T-cell (primary cell): ENCODE measurements at regions of chr19 and their contacts with region 1.

Region 1: DNA sequence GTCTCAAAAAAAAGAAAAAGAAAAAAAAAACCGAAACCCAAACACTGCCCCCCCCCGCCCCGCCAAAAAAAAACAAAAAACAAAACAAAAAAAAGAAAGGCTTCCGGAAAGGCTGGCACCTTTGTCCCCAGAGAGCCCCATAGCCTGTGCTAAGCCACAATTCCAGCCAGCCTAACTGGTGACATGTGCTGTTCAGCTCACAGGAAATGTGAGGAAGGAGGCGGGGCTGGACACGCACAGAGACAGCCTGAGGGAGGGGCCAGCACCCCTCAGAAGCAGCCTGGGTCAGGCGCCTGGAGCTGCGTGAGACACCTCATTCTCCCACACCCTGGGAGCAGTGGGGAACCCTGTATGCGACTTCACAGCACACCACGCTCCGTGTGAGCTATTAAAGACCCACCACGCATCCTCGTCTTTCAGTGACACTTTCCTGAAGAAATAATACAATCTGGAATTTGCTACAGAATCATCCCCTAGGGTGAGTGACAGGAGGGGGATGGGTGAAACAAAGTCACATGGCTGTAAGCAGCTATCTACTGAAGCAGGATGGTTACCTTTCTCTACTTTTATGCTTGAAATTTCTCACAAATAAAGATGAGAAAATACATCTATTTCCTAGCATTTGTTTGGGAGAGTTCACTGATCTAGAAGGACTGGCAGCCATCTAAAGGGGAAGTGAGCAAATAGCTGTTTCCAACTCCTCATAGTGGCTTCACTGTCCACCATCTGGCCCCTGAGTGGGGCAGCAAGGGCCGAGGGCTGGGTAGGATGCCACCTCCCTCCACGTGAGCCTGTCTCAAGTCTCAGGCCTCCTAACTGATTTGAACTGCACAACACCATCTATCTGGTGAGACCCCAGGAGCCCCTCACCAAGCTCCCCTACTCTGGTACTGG is 12.3 kb upstream of the SLC35E1 start:
- DNase-seq: peak; percentile 64 to 98 (median 90)
- ATAC-seq: peak; percentile 83 to 86 (median 84)
- H3K4me3 ChIP-seq: peak overlapping the region; percentile 40 to 58
- H3K4me3 Mint-ChIP-seq: peak overlapping the region; percentile 63 to 86 (median 73)
- H3K27ac ChIP-seq: peak overlapping the region; percentile 76
- H3K27ac Mint-ChIP-seq: peak overlapping the region; percentile 88 to 90
- H3K4me1 ChIP-seq: peaks cover 53 to 91% of the 10 kb centered on the region in 2 experiments
- H3K4me1 Mint-ChIP-seq: peaks cover 83 to 89% (median 88%) of the 10 kb centered on the region in 3 donors
- H3K27me3 ChIP-seq: no peaks in the 10 kb centered on the region
- H3K27me3 Mint-ChIP-seq: no peaks in the 10 kb centered on the region

Region 2: DNA sequence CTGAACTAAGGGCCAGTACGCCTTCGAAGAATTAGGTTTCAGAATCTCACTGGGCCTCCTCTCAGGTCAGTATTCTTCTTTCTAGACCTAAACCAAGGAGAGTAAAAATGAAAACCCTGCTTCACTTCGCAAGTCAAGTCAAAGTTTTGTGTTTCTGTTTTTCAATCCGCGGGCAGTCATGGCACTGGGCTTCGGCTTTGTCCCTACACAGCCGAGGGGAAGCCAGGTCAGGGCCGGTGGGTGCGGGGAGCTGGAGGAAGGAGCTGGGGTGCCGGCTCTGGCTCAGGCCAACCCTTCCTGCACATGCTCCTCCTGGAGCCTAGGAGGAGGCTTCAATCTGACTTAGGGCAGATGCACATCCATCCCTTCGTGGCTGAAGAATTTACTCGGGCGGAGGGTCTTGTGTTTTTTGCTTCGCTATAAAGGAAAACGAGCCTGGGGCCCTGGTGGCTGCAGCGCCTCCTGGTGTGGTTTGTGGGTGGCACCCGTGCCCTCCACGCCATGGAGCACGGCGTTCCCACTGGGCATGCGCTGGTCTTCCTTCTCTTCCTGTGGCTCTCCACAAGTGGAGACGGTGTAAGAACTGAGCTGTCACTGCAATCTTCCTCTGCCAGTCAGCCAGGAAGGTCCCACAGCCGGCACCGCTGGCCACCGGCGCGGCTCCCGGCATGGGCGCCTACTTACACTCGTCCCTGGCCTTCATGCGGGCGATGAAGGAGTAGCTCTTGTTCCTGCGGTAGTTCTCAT is 65.8 kb before region 1 on chr19:
- CTCF ChIA-PET with region 1: no interaction called
- POLR2A ChIA-PET with region 1: no interaction called
- DNase-seq: no peak
- ATAC-seq: peak in 1 of 4 experiments; percentile 10
- H3K4me3 ChIP-seq: no peak overlapping the region
- H3K4me3 Mint-ChIP-seq: no peak overlapping the region
- H3K27ac ChIP-seq: no peak overlapping the region
- H3K27ac Mint-ChIP-seq: no peak overlapping the region
- H3K4me1 ChIP-seq: peaks cover 0 to 12% of the 10 kb centered on the region in 2 experiments
- H3K4me1 Mint-ChIP-seq: peaks cover 0 to 5% (median 4%) of the 10 kb centered on the region in 3 donors
- H3K27me3 ChIP-seq: no peaks in the 10 kb centered on the region
- H3K27me3 Mint-ChIP-seq: no peaks in the 10 kb centered on the region

Region 3: GRCh38 chr19:16542045-16542909 is 42.2 kb before region 1 on chr19 and contains the start of gene CHERP:
- CTCF ChIA-PET with region 1: interaction called in 1 of 2 experiments, 6 read pairs
- POLR2A ChIA-PET with region 1: interaction called, 3 to 11 read pairs
- DNase-seq: peak; percentile 88 to 98 (median 93)
- ATAC-seq: peak; percentile 85 to 91 (median 90)
- H3K4me3 ChIP-seq: peak within 1 kb of the TSS; percentile 75 to 96
- H3K4me3 Mint-ChIP-seq: peak within 1 kb of the TSS; percentile 85 to 92 (median 92)
- H3K27ac ChIP-seq: peak within 1 kb of the TSS; percentile 66
- H3K27ac Mint-ChIP-seq: peak within 1 kb of the TSS; percentile 87 to 91
- H3K4me1 ChIP-seq: peaks cover 19 to 66% of the 10 kb centered on the region in 2 experiments
- H3K4me1 Mint-ChIP-seq: peaks cover 58 to 63% (median 58%) of the 10 kb centered on the region in 3 donors
- H3K27me3 ChIP-seq: no peaks in the 10 kb centered on the region
- H3K27me3 Mint-ChIP-seq: no peaks in the 10 kb centered on the region
- total RNA-seq, gene CHERP: 52.6 to 76.7 (median 70.3) TPM

Region 4: GRCh38 chr19:16566161-16566560 is 18.3 kb before region 1 on chr19:
- CTCF ChIA-PET with region 1: interaction called in 1 of 2 experiments, 11 read pairs
- POLR2A ChIA-PET with region 1: interaction called in 1 of 2 experiments, 7 read pairs
- DNase-seq: peak; percentile 64 to 95 (median 87)
- ATAC-seq: peak; percentile 99 to 100 (median 100)
- H3K4me3 ChIP-seq: peak overlapping the region in 1 of 2 donors; percentile 32
- H3K4me3 Mint-ChIP-seq: peak overlapping the region; percentile 69 to 75 (median 74)
- H3K27ac ChIP-seq: peak overlapping the region; percentile 84
- H3K27ac Mint-ChIP-seq: peak overlapping the region; percentile 99
- H3K4me1 ChIP-seq: peaks cover 10 to 55% of the 10 kb centered on the region in 2 experiments
- H3K4me1 Mint-ChIP-seq: peaks cover 26 to 52% (median 35%) of the 10 kb centered on the region in 3 donors
- H3K27me3 ChIP-seq: no peaks in the 10 kb centered on the region
- H3K27me3 Mint-ChIP-seq: no peaks in the 10 kb centered on the region

Region 5: DNA sequence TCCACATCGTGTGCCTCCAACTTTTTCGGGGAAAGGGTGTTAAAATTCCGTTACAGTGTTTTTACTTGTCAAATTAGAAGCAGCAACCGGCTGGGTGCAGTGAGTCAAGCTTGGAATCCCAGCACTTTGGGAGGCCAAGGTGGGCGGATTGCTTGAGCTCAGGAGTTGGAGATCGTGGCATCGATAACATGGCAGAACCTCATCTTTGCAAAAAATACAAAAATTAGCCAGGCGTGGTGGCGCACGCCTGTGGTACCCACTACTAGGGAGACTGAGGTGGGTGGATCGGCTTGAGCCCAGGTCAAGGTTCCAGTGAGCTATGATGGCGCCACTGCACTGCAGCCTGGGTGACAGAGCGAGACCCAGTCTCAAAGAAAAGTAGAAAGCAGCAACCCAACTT is 11.2 kb before region 1 on chr19:
- CTCF ChIA-PET with region 1: interaction called in 1 of 2 experiments, 11 read pairs
- POLR2A ChIA-PET with region 1: interaction called, 3 read pairs
- DNase-seq: no peak
- ATAC-seq: no peak
- H3K4me3 ChIP-seq: peak overlapping the region; percentile 93 to 99
- H3K4me3 Mint-ChIP-seq: peak overlapping the region; percentile 90 to 98 (median 92)
- H3K27ac ChIP-seq: peak overlapping the region; percentile 95
- H3K27ac Mint-ChIP-seq: peak overlapping the region; percentile 94 to 99
- H3K4me1 ChIP-seq: peaks cover 19 to 62% of the 10 kb centered on the region in 2 experiments
- H3K4me1 Mint-ChIP-seq: peaks cover 56 to 66% (median 62%) of the 10 kb centered on the region in 3 donors
- H3K27me3 ChIP-seq: no peaks in the 10 kb centered on the region
- H3K27me3 Mint-ChIP-seq: no peaks in the 10 kb centered on the region

Region 6: DNA sequence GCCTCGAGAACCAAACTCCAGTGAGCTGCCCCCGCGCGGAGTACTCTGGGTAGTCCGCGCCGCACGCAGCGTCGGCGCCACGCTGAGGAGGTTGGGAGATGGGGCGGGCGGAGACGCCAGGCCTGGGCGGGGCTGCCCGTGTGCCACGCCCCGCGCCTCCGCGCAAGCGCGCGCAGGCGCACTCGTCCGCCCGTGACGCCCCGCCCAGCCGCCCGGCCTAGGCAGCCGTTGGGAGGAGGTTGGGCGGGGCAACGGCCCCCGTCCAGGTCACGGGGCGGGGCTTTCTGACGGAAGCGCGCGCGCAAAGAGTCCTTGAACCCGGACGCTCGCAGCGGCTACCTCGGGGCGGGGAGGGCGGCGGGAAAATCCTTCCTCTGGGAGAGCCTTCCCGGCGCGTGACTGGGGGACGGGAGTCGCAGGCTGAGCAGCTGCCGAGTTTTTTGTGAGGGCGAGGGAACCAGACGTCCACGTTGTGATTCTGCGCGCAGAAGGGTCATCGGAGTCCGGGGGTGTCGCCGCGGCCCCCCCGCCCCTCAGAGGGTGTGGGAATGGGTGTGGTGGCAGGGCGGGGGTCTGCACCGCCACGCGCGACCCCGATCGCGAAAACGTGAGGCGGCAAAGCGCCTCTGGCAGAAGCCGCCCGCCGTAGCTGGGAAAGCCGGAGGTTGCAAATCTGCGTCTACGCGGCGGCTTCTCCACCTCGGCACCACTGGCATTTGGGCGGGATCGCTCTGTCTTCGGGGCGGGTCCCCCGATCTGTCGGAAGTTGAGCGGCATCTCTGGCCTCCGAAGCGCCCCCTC is 43.9 kb after region 1 on chr19 and contains the start of gene MED26:
- CTCF ChIA-PET with region 1: interaction called in 1 of 2 experiments, 5 read pairs
- POLR2A ChIA-PET with region 1: interaction called, 10 to 13 read pairs
- DNase-seq: peak; percentile 87 to 98 (median 93)
- ATAC-seq: peak; percentile 90 to 94 (median 92)
- H3K4me3 ChIP-seq: peak within 1 kb of the TSS; percentile 91 to 95
- H3K4me3 Mint-ChIP-seq: peak within 1 kb of the TSS; percentile 97 to 99 (median 98)
- H3K27ac ChIP-seq: peak within 1 kb of the TSS; percentile 89
- H3K27ac Mint-ChIP-seq: peak within 1 kb of the TSS; percentile 98
- H3K4me1 ChIP-seq: peaks cover 15 to 38% of the 10 kb centered on the region in 2 experiments
- H3K4me1 Mint-ChIP-seq: peaks cover 44 to 51% (median 46%) of the 10 kb centered on the region in 3 donors
- H3K27me3 ChIP-seq: no peaks in the 10 kb centered on the region
- H3K27me3 Mint-ChIP-seq: no peaks in the 10 kb centered on the region
- total RNA-seq, gene MED26: 14.7 to 42.0 (median 21.1) TPM

Region 7: DNA sequence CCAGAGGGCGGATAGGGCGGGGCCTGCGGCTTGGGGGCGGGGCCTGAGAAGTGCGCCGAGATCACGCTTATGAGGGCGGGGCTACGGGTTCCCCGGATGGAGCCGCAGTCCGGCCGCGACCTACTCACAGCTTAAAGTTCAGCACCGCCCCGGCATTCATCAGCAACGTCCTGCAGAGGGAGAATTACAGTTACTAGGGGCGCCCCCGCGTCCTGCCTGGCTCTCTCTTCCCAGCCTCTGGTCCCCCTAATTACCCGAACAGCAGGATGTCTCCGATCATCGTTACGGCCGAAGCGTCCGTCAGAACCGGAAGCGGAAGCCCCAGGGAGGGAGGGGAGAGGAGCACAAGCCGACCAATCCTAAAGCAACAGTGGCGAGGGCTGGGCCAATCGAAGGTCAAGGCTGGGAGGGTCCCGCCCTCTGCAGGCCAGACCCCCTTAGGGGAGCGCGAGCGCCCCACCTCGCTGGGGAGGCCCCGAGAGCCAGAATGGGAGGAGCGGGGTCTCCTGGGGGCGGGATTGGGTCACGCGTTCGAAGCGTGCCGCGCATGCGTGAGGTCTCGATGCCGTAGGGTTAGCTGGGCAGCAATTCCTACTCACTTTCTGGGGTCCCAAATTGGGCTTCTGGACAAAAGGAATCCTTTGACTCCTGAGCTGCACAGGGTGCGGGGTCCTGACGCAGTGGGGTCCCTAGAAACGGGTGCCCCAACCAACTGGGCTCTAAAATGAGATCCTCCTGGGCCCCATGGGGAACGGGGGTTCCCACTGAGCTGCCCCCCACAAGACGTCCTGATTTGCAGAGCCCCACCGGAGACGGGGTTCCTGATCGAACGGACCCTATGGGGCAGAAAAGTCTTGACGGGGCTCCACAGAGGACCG is 75.6 kb after region 1 on chr19 and contains the start of gene SMIM7:
- CTCF ChIA-PET with region 1: interaction called in 1 of 2 experiments, 6 read pairs
- POLR2A ChIA-PET with region 1: interaction called in 1 of 2 experiments, 12 read pairs
- DNase-seq: peak; percentile 95 to 99 (median 98)
- ATAC-seq: peak; percentile 96 to 98 (median 97)
- H3K4me3 ChIP-seq: peak within 1 kb of the TSS; percentile 91 to 98
- H3K4me3 Mint-ChIP-seq: peak within 1 kb of the TSS; percentile 93 to 98 (median 93)
- H3K27ac ChIP-seq: peak within 1 kb of the TSS; percentile 74
- H3K27ac Mint-ChIP-seq: peak within 1 kb of the TSS; percentile 94 to 100
- H3K4me1 ChIP-seq: peaks cover 7 to 48% of the 10 kb centered on the region in 2 experiments
- H3K4me1 Mint-ChIP-seq: peaks cover 28 to 52% (median 44%) of the 10 kb centered on the region in 3 donors
- H3K27me3 ChIP-seq: peaks cover 0 to 7% of the 10 kb centered on the region in 2 experiments
- H3K27me3 Mint-ChIP-seq: no peaks in the 10 kb centered on the region
- total RNA-seq, gene SMIM7: 56.7 to 77.6 (median 73.1) TPM